ENCODE measurements at regions of chr6 and their contacts with region 1.

Region 1: DNA sequence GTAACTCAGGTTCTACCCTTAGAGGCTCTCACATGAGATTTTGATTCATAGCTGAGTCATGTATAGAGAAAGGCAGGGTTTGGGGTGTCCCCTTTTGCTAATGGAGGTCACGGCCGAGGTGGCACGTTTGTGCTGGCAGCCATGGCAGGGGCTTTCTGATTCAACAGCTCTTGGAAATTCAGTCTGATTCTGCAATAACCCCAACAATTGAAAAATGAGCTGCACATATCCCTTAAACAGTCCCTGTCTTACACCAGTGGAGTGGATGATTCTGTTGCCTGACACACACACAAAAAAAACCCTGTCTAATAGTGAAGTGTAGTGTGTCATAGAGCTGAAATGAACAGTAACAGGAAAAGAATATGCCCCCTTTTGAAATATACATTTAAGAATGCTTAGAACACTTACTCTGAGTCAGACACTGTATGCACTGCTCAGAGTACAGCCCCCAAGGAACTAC is 40.4 kb upstream of the ARG1 start:
- DNase-seq: no peak
- H3K4me3 Mint-ChIP-seq: no peak overlapping the region
- H3K27ac Mint-ChIP-seq: peak overlapping the region; percentile 24
- H3K4me1 Mint-ChIP-seq: peaks cover 39% of the 10 kb centered on the region
- H3K27me3 Mint-ChIP-seq: peaks cover 3% of the 10 kb centered on the region

Region 2: DNA sequence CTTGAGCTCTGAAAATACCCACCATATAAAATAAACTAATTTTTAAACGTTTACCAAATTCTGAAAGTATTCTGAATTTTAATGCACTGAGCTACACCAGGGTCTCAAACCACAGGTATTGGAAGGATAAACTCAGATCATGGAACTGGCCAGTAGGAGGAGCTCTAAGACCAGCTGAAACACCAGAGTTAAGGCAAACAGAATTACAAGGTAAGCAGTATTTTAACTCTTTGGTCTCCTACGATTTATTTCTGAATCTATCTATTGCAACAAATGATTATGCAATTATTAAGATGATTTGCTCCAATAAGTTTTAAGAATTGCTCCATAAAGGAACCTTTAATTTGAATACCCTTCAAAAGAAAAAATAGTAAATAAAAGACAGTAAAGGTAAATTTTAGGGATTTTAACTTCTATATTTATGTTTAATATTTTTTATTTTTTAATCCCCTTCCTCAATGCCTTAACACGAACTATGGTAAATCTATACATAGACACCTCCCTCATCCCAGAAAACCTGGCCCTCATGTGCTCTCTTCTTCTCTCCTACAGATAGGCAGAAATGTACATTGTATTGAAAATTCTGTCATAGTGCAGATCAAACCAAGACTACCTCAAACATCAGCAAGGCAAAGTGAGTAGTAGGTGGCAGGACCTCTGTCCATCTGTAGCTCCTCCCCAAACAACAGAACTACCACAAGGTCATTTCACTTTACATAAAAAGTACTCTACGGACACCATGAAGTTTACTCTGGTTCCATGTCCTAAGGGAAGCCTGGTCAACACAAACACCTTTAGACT is 647.0 kb before region 1 on chr6:
- intact Hi-C with region 1: loop called (anchors 1 kb)
- DNase-seq: peak; percentile 53
- H3K4me3 Mint-ChIP-seq: no peak overlapping the region
- H3K27ac Mint-ChIP-seq: no peak overlapping the region
- H3K4me1 Mint-ChIP-seq: no peaks in the 10 kb centered on the region
- H3K27me3 Mint-ChIP-seq: no peaks in the 10 kb centered on the region

Region 3: GRCh38 chr6:131116749-131117360 is 415.8 kb before region 1 on chr6:
- intact Hi-C with region 1: loop called (anchors 2 kb)
- DNase-seq: no peak
- H3K4me3 Mint-ChIP-seq: no peak overlapping the region
- H3K27ac Mint-ChIP-seq: no peak overlapping the region
- H3K4me1 Mint-ChIP-seq: no peaks in the 10 kb centered on the region
- H3K27me3 Mint-ChIP-seq: peaks cover 2% of the 10 kb centered on the region

Region 4: DNA sequence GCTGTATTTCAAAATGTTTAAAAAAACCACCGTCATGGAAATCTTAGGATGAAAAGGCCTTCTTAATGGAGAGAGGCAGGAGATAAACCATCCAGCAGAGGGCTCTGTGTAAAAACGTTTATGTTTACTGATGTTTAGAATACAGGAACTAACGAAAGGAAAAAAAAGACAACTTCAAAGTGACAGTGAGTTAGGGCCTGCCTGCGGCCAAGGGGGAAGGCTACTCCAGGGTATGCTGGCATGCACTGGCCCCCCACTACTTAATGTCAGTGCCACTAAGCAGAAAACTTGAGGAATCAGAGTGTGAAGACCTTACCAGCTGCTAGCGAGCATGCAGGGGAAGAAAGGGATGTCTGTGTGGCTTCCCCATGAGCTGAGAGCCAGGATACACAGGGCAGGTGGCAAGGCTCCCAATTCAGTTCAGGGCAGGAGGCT is 349.6 kb before region 1 on chr6:
- intact Hi-C with region 1: loop called (anchors 1 kb)
- DNase-seq: peak; percentile 12
- H3K4me3 Mint-ChIP-seq: no peak overlapping the region
- H3K27ac Mint-ChIP-seq: peak overlapping the region; percentile 69
- H3K4me1 Mint-ChIP-seq: peaks cover 7% of the 10 kb centered on the region
- H3K27me3 Mint-ChIP-seq: no peaks in the 10 kb centered on the region

Region 5: GRCh38 chr6:131225127-131225526 is 307.5 kb before region 1 on chr6:
- intact Hi-C with region 1: no loop called
- DNase-seq: no peak
- H3K4me3 Mint-ChIP-seq: no peak overlapping the region
- H3K27ac Mint-ChIP-seq: no peak overlapping the region
- H3K4me1 Mint-ChIP-seq: no peaks in the 10 kb centered on the region
- H3K27me3 Mint-ChIP-seq: no peaks in the 10 kb centered on the region

Region 6: DNA sequence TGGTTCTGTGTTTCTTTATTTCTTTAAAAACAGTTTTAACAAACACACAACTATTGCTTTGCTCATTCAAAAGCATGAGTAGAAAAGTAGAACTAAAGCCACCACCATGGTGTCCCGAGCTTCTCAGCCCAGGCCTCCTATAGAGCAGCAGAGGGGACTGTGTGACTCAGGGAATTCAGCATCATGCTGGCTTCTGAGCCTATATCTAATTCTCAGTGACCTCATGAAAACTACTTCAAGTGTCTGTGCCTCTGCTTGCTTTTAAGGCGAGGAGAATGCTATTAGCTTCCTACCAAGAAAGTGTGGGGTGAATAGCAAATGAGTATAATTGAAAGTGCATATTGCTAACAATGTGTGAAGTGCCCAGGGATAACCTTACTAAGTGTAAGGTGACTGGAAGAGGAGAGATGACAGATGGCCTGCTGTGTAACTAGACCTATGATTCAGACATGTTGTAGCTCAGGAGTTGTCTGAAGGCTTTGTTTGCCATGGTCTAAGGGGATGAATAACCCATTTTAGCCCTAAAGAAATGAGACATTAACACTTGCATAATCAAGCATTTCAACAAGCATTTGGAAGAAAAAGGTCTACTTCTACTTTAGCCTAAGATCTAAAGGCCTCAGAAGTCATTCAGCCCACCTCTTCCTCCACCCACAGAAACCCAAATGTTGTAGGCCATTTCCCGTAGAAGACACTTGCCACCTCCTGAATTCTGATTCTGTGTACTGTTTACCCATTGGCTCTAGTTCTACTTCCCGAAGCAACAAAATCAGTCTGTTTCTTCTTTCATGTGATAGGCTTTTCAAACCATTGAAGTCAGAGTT is 81.1 kb before region 1 on chr6:
- intact Hi-C with region 1: loop called (anchors 5 kb)
- DNase-seq: no peak
- H3K4me3 Mint-ChIP-seq: peak overlapping the region; percentile 28
- H3K27ac Mint-ChIP-seq: peak overlapping the region; percentile 87
- H3K4me1 Mint-ChIP-seq: peaks cover 46% of the 10 kb centered on the region
- H3K27me3 Mint-ChIP-seq: no peaks in the 10 kb centered on the region

Region 7: GRCh38 chr6:131510094-131510493 is 22.5 kb before region 1 on chr6:
- intact Hi-C with region 1: no loop called
- DNase-seq: no peak
- H3K4me3 Mint-ChIP-seq: no peak overlapping the region
- H3K27ac Mint-ChIP-seq: no peak overlapping the region
- H3K4me1 Mint-ChIP-seq: no peaks in the 10 kb centered on the region
- H3K27me3 Mint-ChIP-seq: peaks cover 1% of the 10 kb centered on the region

Region 8: DNA sequence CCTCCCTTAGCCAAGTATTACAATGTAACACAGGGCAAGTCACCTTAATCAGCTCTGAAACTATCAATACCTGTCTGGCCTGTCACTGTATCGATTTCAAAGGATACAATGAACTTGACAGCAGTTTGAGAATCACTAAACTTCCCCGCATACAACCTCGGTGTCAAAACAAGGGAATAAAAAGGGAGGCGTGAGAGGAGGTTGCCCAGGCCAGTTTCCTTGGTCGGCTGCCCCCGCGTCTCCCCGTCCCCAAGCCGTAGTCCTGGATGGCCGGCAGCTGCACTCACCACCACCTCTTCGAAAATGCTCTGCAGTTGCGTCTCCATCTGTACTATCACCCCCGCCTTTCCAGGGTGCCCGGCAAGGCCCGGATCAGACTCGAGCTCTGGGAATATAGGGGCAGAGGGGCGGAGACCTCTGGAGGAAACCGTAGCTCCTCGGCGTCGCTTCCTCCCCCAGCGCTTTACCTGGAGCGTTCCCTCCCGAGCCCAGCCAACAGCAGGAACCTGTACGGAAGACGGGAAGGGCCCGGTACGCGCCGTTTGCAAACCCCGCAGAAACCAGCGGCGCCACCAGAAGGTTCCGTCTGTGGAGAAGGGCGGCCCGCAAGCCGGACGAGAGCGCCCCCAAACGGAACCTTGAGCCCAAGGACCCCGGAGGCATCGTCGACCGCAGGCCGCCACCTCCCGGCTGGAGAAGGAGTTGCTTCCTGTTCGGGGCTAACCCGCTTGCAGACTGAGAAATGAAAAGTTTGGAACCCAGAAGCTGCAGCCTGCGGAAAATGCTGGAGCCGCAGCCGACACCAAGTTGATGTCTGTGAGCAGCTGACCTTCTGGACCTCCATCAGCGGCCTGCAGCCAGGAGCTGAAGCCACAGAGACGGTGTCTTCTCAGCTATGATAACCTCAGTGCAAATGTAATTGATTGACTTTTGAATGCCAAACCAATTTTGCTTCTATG is 95.4 kb after region 1 on chr6 and contains the start of gene MED23:
- intact Hi-C with region 1: loop called (anchors 5 kb)
- DNase-seq: peak; percentile 92
- H3K4me3 Mint-ChIP-seq: peak within 1 kb of the TSS; percentile 99
- H3K27ac Mint-ChIP-seq: peak within 1 kb of the TSS; percentile 94
- H3K4me1 Mint-ChIP-seq: peaks cover 36% of the 10 kb centered on the region
- H3K27me3 Mint-ChIP-seq: no peaks in the 10 kb centered on the region
- total RNA-seq, gene MED23: 34.0 and 36.3 TPM in 2 replicates

Region 9: GRCh38 chr6:131923356-131923755 is 390.7 kb after region 1 on chr6:
- intact Hi-C with region 1: no loop called
- DNase-seq: no peak
- H3K4me3 Mint-ChIP-seq: no peak overlapping the region
- H3K27ac Mint-ChIP-seq: no peak overlapping the region
- H3K4me1 Mint-ChIP-seq: no peaks in the 10 kb centered on the region
- H3K27me3 Mint-ChIP-seq: peaks cover 10% of the 10 kb centered on the region